Left ventricle myocardium superior (tissue), 1 donor: ENCODE measurements at regions of chr3 and their contacts with region 1.

Region 1: GRCh38 chr3:130892759-130893375 is 1.0 kb upstream of the ATP2C1 start:
- DNase-seq: no peak
- ATAC-seq: peak; percentile 77

Region 2: GRCh38 chr3:130759699-130760338 is 133.0 kb before region 1 on chr3:
- intact Hi-C with region 1: loop called (anchors 2 kb)
- DNase-seq: peak; percentile 32
- ATAC-seq: peak; percentile 86